Thyroid gland (tissue), 4 donors: ENCODE measurements at regions of chr7 and their contacts with region 1.

Region 1: DNA sequence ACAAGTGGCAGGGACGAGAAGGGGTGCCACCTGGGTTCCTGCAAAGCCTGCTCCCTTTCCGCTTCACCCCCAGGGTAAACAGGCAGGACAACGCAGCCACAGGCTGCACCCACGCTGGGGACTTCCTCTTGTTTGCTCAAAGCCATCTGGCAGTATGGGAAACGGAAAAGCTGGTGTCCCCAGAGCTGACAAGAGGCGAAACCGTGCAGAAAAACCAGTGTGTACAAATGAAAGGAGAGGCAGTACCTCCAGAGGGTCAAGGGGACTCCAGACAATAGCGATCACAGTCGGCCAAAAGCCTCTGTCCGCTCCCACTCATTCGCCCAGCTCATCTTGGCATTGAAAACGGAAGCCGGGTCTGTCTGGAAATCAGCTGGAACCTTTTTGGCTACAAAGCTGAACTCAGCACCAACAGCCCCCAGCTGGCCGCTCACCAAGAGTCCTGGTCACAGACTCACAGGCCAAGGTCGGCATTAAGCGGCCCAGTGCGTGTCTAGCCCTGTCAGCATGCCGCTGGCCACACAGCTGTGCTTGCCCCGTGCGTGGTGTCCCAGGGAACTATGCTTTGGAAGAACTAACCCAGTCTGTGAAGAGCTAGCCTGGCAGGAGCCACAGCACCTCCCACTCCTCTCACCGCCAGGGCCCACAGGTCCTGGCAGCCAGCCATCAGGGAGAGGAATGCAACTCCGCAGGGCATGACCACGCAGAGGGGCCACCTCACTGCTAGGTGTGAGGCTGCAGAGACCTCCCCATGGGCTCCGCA is 10.4 kb downstream of the TNS3 start:
- DNase-seq: peak; percentile 96
- H3K4me3 ChIP-seq: no peak overlapping the region
- H3K27ac ChIP-seq: peak overlapping the region; percentile 84 to 96 (median 85)
- H3K4me1 ChIP-seq: peaks cover 68 to 88% of the 10 kb centered on the region in 2 donors
- H3K27me3 ChIP-seq: no peaks in the 10 kb centered on the region
- CTCF ChIP-seq: peak in 1 of 6 experiments; percentile 36
- POLR2A ChIP-seq: peak in 1 of 2 donors; percentile 80

Region 2: DNA sequence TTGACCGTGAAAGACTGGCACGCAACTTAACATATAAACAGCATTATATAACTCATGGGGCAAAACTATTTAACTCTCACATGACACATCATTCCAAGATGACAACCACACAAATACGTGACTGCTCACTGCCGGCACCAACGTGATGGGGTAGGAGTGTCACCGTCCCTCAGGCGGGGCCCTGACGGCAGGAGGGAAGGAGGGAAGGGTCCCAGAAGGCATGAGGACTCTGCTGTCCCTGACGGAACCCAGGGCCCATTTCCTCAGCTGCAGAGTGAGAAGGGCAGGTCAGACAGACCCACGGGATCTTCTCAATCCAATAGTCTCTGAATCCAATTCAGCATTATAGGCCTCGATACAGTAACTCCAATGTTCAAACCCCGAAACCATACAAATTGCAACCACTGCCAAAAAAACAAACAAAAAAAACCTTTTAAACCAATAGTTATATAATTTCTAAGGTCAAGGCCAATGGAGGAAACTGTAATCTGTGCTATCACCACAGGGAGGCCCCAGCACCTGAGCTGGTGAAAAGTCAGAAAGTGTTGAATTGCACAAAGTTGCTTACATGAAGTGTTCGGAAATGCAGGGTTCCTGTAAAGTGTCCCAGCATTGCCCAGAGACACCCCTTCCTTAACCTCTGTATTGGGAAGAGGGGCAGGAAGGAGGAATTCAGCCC is 127.0 kb before region 1 on chr7:
- intact Hi-C with region 1: loop called (anchors 10 kb)
- DNase-seq: peak; percentile 42 to 56
- H3K4me3 ChIP-seq: no peak overlapping the region
- H3K27ac ChIP-seq: peak overlapping the region in 1 of 3 donors; percentile 43
- H3K4me1 ChIP-seq: peaks cover 3 to 41% of the 10 kb centered on the region in 2 donors
- H3K27me3 ChIP-seq: no peaks in the 10 kb centered on the region
- CTCF ChIP-seq: peak; percentile 21 to 81 (median 60)
- POLR2A ChIP-seq: no peak

Region 3: GRCh38 chr7:48025630-48026029 is 454.1 kb after region 1 on chr7:
- intact Hi-C with region 1: no loop called
- DNase-seq: no peak
- H3K4me3 ChIP-seq: no peak overlapping the region
- H3K27ac ChIP-seq: no peak overlapping the region
- H3K4me1 ChIP-seq: no peaks in the 10 kb centered on the region
- H3K27me3 ChIP-seq: no peaks in the 10 kb centered on the region
- CTCF ChIP-seq: no peak
- POLR2A ChIP-seq: no peak